Activated CD4-positive, alpha-beta memory T cell treated with anti-CD3 and anti-CD28 coated beads for 36 hours (primary cell): ENCODE measurements at regions of chr16 and their contacts with region 1.

Region 1: GRCh38 chr16:55465077-55465896 is 13.7 kb upstream of the MMP2 start:
- DNase-seq: peak; percentile 86
- H3K4me3 Mint-ChIP-seq: no peak overlapping the region
- H3K27ac Mint-ChIP-seq: no peak overlapping the region
- H3K4me1 Mint-ChIP-seq: no peaks in the 10 kb centered on the region
- H3K27me3 Mint-ChIP-seq: peaks cover 3% of the 10 kb centered on the region

Region 2: DNA sequence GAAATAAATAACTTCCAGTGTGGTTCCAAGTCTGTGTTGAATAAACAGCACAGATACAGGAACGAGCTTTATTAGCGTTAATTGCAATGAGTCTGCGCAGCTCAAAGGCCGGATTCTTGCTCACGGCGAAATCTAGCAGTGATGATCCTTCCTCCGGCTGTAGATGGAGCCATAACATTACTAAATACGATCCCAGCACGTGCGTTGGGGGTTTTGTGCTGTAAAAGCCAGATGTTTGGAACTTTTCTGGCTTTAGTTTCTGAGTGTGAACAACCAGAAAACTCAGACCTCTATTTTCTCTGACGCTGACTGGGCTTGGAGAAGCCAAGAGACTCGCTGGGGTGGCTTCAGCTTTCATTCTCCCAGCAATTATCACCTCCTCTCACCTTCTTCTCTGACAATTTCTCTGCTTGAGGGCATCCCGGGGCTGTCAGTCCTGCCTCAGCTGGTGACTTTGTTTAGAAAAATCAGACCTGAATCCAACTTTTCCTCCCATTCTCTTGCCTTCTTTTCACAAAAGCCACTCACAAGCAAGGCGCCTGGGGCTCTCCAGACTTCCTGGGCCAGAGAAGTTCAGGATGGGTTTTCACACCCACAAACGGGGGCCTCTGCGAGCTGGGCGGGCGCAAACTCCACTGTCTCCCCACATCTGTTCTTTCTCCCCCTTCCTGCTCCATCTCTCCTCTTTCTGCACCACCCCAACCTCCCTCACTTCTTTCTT is 1915.2 kb before region 1 on chr16:
- CTCF ChIA-PET with region 1: interaction called, 10 read pairs
- POLR2A ChIA-PET with region 1: no interaction called
- intact Hi-C with region 1: no loop called
- DNase-seq: peak; percentile 64
- H3K4me3 Mint-ChIP-seq: no peak overlapping the region
- H3K27ac Mint-ChIP-seq: no peak overlapping the region
- H3K4me1 Mint-ChIP-seq: peaks cover 19% of the 10 kb centered on the region
- H3K27me3 Mint-ChIP-seq: no peaks in the 10 kb centered on the region

Region 3: GRCh38 chr16:55411231-55411630 is 54.1 kb before region 1 on chr16:
- CTCF ChIA-PET with region 1: no interaction called
- POLR2A ChIA-PET with region 1: no interaction called
- intact Hi-C with region 1: no loop called
- DNase-seq: no peak
- H3K4me3 Mint-ChIP-seq: no peak overlapping the region
- H3K27ac Mint-ChIP-seq: no peak overlapping the region
- H3K4me1 Mint-ChIP-seq: no peaks in the 10 kb centered on the region
- H3K27me3 Mint-ChIP-seq: peaks cover 11% of the 10 kb centered on the region

Region 4: DNA sequence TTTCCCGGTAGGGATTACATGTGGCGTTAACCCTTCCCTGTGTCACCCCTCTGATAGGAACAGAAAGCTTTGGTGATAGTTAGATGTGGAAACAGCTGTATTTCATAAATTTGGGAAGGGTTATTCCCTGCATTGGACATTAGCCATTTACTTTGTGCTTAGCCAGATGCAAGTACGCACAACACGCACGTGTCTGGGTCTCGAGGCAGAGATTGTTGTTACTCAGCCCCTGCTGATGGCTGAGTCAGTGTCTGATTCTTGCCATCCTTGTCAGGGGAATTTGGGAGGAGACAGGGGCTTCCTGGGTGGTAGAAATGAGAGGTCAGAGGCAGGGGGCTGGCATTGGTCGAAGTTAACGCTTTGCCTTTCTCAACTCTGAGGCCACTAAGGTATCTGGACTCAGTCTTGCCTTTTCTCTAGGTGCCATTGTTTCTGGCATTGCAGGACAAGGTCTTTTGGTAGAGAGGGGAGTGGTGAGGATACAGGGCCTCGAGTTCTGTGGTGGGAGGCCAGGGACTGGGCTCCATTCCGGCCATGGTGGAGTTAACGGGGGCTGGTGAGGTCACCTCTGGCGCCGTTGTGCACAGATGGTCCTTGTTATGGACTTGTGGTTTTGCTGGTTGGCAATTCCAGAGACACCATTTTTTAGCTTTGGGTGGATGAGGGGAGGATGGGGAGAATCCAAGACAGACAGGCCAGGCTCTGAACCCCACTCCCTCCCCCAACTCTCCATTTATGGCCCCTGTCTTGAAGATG is 21.9 kb after region 1 on chr16:
- CTCF ChIA-PET with region 1: interaction called, 10 read pairs
- POLR2A ChIA-PET with region 1: no interaction called
- intact Hi-C with region 1: no loop called
- DNase-seq: no peak
- H3K4me3 Mint-ChIP-seq: no peak overlapping the region
- H3K27ac Mint-ChIP-seq: no peak overlapping the region
- H3K4me1 Mint-ChIP-seq: no peaks in the 10 kb centered on the region
- H3K27me3 Mint-ChIP-seq: peaks cover 10% of the 10 kb centered on the region

Region 5: GRCh38 chr16:55526441-55526840 is 61.2 kb after region 1 on chr16:
- CTCF ChIA-PET with region 1: interaction called, 12 read pairs
- POLR2A ChIA-PET with region 1: no interaction called
- intact Hi-C with region 1: no loop called
- DNase-seq: no peak
- H3K4me3 Mint-ChIP-seq: no peak overlapping the region
- H3K27ac Mint-ChIP-seq: no peak overlapping the region
- H3K4me1 Mint-ChIP-seq: no peaks in the 10 kb centered on the region
- H3K27me3 Mint-ChIP-seq: peaks cover 2% of the 10 kb centered on the region

Region 6: GRCh38 chr16:55585631-55586030 is 120.3 kb after region 1 on chr16:
- CTCF ChIA-PET with region 1: no interaction called
- POLR2A ChIA-PET with region 1: no interaction called
- intact Hi-C with region 1: no loop called
- DNase-seq: no peak
- H3K4me3 Mint-ChIP-seq: no peak overlapping the region
- H3K27ac Mint-ChIP-seq: no peak overlapping the region
- H3K4me1 Mint-ChIP-seq: no peaks in the 10 kb centered on the region
- H3K27me3 Mint-ChIP-seq: peaks cover 8% of the 10 kb centered on the region

Region 7: GRCh38 chr16:55701442-55702319 is 236.4 kb after region 1 on chr16:
- CTCF ChIA-PET with region 1: interaction called, 238 read pairs
- POLR2A ChIA-PET with region 1: interaction called, 4 read pairs
- intact Hi-C with region 1: loop called (anchors 1 kb)
- DNase-seq: peak; percentile 58
- H3K4me3 Mint-ChIP-seq: no peak overlapping the region
- H3K27ac Mint-ChIP-seq: no peak overlapping the region
- H3K4me1 Mint-ChIP-seq: peaks cover 1% of the 10 kb centered on the region
- H3K27me3 Mint-ChIP-seq: peaks cover 5% of the 10 kb centered on the region

Region 8: DNA sequence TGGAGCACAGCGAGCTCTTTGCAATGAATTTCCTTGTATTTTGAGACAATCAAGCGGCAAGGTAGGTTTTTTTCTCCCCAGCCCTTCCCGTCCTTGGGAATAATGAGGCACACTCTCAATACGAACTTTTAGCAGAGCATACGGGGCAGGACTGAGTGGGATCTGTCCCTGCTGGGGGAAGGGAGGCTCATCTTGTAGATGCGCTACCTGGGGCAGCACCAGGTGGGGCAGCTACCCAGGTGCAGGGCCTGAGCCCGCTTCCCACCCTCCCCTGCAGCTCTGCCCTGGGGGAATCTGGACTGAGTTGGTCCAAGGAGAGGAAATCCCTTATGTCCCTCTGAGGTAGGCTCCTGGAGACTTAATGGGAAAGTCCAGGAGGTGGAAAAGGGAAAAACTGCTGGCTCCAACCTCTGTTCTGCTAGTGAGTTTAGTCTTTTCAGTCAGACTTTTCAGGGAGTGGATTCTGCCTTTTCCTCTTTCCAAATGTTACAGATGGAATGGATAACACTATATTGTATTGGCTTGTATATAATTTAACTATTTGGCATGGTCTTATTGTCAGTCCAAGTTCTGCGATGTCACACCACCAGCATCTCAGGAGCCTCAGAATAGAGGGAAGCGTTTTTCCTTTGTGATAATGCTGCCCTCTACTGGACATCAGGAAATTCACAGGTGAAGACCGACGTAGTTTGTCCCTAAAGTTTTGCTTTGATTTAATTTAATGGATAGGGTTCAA is 377.2 kb after region 1 on chr16:
- CTCF ChIA-PET with region 1: interaction called, 31 read pairs
- POLR2A ChIA-PET with region 1: no interaction called
- intact Hi-C with region 1: loop called (anchors 1 kb)
- DNase-seq: peak; percentile 15
- H3K4me3 Mint-ChIP-seq: no peak overlapping the region
- H3K27ac Mint-ChIP-seq: no peak overlapping the region
- H3K4me1 Mint-ChIP-seq: no peaks in the 10 kb centered on the region
- H3K27me3 Mint-ChIP-seq: peaks cover 8% of the 10 kb centered on the region

Region 9: DNA sequence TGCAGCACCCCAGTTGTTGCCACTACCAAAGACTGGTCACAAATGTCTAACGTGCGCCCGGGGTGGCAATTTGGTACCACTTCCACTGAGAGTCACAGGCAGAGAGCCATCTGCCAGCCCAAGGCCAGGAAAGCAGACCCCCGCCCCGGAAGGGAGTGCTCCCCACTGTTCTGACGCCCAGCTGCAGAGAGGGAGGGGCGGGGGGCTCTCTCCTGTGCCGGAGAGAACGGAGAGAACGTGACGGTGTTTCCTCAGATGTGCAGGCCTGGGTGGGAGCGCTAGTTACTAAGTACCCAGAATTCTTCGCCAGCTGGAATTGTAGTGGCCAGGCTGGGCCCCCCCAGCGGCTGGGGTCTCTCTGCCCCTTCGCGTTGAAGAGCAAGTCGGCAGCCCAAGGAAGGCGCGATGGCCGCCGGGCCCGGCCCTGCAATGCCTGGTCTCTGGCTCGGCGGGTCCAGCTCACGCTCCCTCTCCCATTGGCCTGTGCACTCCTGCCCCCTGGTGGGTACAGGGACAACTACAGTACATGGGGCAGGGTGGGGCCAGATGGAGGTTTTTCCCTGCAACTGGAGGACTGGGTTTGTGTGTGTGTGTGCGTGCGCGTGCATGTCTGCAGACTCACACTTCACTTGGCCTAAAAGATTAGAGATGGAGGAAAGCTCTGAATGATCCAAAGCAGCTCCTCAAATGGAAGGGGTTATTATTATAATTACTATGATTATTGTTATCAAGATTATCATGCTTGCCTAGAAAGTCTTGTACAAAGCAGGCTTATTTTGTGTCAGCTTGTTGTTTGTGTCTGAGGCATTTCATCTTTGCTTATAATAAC is 852.9 kb after region 1 on chr16:
- CTCF ChIA-PET with region 1: interaction called, 10 read pairs
- POLR2A ChIA-PET with region 1: no interaction called
- intact Hi-C with region 1: loop called (anchors 10 kb)
- DNase-seq: peak; percentile 87
- H3K4me3 Mint-ChIP-seq: no peak overlapping the region
- H3K27ac Mint-ChIP-seq: no peak overlapping the region
- H3K4me1 Mint-ChIP-seq: peaks cover 3% of the 10 kb centered on the region
- H3K27me3 Mint-ChIP-seq: no peaks in the 10 kb centered on the region

Region 10: GRCh38 chr16:56419740-56420548 is 954.7 kb after region 1 on chr16:
- CTCF ChIA-PET with region 1: no interaction called
- POLR2A ChIA-PET with region 1: no interaction called
- intact Hi-C with region 1: no loop called
- DNase-seq: no peak
- H3K4me3 Mint-ChIP-seq: no peak overlapping the region
- H3K27ac Mint-ChIP-seq: no peak overlapping the region
- H3K4me1 Mint-ChIP-seq: peaks cover 44% of the 10 kb centered on the region
- H3K27me3 Mint-ChIP-seq: no peaks in the 10 kb centered on the region